Activated CD4-positive, alpha-beta T cell treated with anti-CD3 and anti-CD28 coated beads, Interleukin-2, amount 10 ng/mL, durations not matched to agents 24 days and 14 days (primary cell): ENCODE measurements at regions of chr14 and their contacts with region 1.

Region 1: DNA sequence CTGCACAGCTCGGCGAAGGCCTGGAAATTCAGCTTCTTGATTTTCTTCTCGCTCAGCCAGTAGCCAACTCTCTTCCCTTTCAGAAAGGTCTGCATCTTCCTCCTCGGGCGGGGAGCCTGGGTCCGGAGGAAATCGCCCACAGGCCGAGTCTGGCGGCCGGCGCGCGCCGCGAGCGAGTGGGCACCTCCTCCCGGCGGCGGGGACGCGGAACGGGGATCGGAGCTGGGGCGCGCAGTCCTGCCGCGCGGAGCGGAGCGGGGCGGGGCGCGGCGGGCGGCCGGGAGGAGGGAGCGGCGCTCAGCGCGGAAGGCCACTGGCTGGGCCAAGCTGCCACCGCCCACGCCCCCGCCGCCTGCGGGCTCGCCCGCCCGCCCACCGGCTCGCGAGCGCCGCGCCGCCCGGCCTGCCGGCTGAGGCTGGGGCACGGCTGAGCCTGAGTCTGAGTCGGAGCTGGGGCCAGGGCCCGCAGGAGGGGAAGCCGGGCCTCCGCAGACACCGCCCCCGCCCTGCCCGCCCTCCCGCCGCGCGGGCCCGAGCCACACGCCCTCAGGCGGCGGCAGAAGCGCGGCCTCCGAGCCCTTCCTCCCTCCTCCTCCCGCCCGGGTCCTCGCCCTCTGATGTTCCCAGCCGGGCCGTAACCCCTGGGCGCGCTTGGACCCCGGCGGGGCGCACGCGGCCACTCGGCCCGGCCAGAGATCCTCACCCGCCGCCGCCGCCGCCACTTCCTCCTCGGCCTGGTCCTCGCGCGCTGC is 480 bp downstream of the ITPK1 start:
- DNase-seq: peak; percentile 96
- H3K4me3 Mint-ChIP-seq: peak overlapping the region; percentile 90
- H3K27ac Mint-ChIP-seq: peak overlapping the region; percentile 62
- H3K4me1 Mint-ChIP-seq: peaks cover 26% of the 10 kb centered on the region
- H3K27me3 Mint-ChIP-seq: no peaks in the 10 kb centered on the region

Region 2: GRCh38 chr14:93064411-93065323 is 50.6 kb before region 1 on chr14:
- intact Hi-C with region 1: loop called (anchors 2 kb)
- DNase-seq: no peak
- H3K4me3 Mint-ChIP-seq: peak overlapping the region; percentile 31
- H3K27ac Mint-ChIP-seq: peak overlapping the region; percentile 92
- H3K4me1 Mint-ChIP-seq: peaks cover 45% of the 10 kb centered on the region
- H3K27me3 Mint-ChIP-seq: no peaks in the 10 kb centered on the region

Region 3: DNA sequence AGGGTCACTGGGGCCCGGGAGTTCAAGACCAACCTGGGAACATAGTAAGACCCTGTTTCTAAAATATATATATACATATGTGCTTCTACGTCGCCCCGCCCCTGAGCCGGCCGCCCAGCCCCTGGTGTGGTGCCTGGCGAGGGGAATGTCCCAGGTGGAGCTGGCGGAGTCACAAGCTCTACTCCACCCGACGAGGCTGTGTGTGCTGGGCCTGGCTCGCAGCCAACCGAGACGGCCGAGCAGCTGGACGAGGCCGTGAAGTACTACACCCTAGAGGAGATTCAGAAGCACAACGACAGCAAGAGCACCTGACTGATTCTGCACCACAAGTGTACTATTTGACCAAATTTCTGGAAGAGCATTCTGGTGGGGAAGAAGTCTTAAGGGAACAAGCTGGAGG is 22.6 kb after region 1 on chr14:
- intact Hi-C with region 1: loop called (anchors 1 kb)
- DNase-seq: no peak
- H3K4me3 Mint-ChIP-seq: no peak overlapping the region
- H3K27ac Mint-ChIP-seq: no peak overlapping the region
- H3K4me1 Mint-ChIP-seq: peaks cover 4% of the 10 kb centered on the region
- H3K27me3 Mint-ChIP-seq: peaks cover 3% of the 10 kb centered on the region

Region 4: GRCh38 chr14:93206793-93207467 is 91.7 kb after region 1 on chr14 and contains the starts of genes GON7 and UBR7:
- intact Hi-C with region 1: loop called (anchors 5 kb)
- DNase-seq: peak; percentile 98
- H3K4me3 Mint-ChIP-seq: peak within 1 kb of the TSS; percentile 74
- H3K27ac Mint-ChIP-seq: peak within 1 kb of the TSS; percentile 97
- H3K4me1 Mint-ChIP-seq: peaks cover 32% of the 10 kb centered on the region
- H3K27me3 Mint-ChIP-seq: no peaks in the 10 kb centered on the region
- total RNA-seq, gene GON7: 16.3 and 17.0 TPM in 2 replicates
- total RNA-seq, gene UBR7: 32.5 and 35.3 TPM in 2 replicates

Region 5: GRCh38 chr14:93332853-93333630 is 217.8 kb after region 1 on chr14 and contains the start of gene BTBD7:
- intact Hi-C with region 1: loop called (anchors 5 kb)
- DNase-seq: peak; percentile 98
- H3K4me3 Mint-ChIP-seq: peak within 1 kb of the TSS; percentile 93
- H3K27ac Mint-ChIP-seq: peak within 1 kb of the TSS; percentile 94
- H3K4me1 Mint-ChIP-seq: peaks cover 38% of the 10 kb centered on the region
- H3K27me3 Mint-ChIP-seq: no peaks in the 10 kb centered on the region
- total RNA-seq, gene BTBD7: 15.2 and 19.4 TPM in 2 replicates